Activated CD4-positive, alpha-beta T cell treated with anti-CD3 and anti-CD28 coated beads, Interleukin-2, amount 10 ng/mL, durations not matched to agents 24 days and 14 days (primary cell): ENCODE measurements at regions of chr5 and their contacts with region 1.

Region 1: DNA sequence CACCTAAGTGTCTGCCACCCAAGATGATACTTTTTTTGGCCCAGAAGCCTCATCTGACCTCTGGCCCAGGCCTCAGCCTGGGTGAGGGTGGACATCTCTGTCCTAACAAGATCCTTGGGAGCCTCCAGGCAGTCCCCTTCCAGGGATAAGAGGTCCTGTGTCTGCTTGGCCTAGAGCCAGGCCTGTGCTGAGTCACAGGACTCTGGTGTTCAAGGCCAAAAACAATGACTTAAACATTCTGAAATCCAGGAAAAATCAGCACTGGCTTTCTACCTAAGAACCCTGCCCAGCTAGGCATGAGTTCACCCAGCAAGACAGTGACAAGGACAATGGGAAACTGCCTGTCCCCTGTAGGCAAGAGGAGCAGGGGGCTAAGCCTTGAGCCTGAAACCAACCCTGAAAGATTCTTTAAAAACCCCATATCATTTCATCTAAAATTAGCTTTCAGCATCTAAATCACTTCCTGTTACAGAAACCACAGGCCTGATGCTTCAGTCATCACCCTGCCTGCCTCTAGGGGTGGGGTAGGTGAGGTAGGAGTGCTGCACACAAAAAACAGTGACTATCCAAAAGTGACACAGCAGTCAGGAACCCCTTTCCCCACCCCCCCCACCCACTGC is 29.9 kb downstream of the CSF2 start:
- DNase-seq: peak; percentile 92
- H3K4me3 Mint-ChIP-seq: peak overlapping the region; percentile 55
- H3K27ac Mint-ChIP-seq: peak overlapping the region; percentile 98
- H3K4me1 Mint-ChIP-seq: peaks cover 72% of the 10 kb centered on the region
- H3K27me3 Mint-ChIP-seq: no peaks in the 10 kb centered on the region

Region 2: GRCh38 chr5:130501151-130501865 is 1602.1 kb before region 1 on chr5:
- intact Hi-C with region 1: no loop called
- DNase-seq: no peak
- H3K4me3 Mint-ChIP-seq: no peak overlapping the region
- H3K27ac Mint-ChIP-seq: no peak overlapping the region
- H3K4me1 Mint-ChIP-seq: no peaks in the 10 kb centered on the region
- H3K27me3 Mint-ChIP-seq: no peaks in the 10 kb centered on the region

Region 3: GRCh38 chr5:131252824-131253171 is 850.6 kb before region 1 on chr5:
- intact Hi-C with region 1: loop called (anchors 10 kb)
- DNase-seq: peak; percentile 94
- H3K4me3 Mint-ChIP-seq: peak overlapping the region; percentile 85
- H3K27ac Mint-ChIP-seq: peak overlapping the region; percentile 96
- H3K4me1 Mint-ChIP-seq: peaks cover 55% of the 10 kb centered on the region
- H3K27me3 Mint-ChIP-seq: no peaks in the 10 kb centered on the region

Region 4: DNA sequence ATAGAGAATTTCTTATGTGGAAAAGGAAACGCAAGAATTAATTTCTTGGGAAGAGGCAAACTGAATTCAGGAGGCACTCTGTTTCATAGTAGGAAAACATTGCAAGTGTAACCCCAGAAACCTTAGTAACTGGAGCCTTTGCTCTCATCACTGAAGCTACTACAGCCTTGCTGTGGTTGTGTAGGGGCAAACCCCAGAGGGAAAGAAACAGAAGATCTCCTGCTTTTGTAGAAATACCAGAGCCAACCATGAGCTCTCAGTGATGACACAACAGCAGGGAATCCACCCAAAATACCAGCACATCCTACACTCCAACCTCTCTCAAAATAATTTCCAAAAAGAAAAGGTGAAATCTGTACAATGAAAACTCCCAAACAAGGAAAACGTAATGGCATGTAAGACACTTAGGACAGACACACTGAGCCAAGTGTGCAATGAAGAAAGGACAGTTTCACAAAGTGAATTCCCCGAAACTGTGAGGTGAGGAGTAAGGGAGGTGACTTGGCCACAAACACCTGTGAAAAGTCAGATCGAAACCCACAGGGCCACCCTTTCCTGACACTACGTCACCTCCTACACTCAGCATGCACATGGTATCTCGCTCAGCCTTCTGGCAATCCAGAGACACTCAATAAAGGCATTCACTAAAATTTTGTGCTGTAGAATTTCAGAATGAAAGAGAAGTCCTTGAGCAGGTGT is 83.4 kb before region 1 on chr5:
- intact Hi-C with region 1: loop called (anchors 1 kb)
- DNase-seq: peak; percentile 95
- H3K4me3 Mint-ChIP-seq: peak overlapping the region; percentile 49
- H3K27ac Mint-ChIP-seq: peak overlapping the region; percentile 87
- H3K4me1 Mint-ChIP-seq: peaks cover 45% of the 10 kb centered on the region
- H3K27me3 Mint-ChIP-seq: peaks cover 41% of the 10 kb centered on the region

Region 5: DNA sequence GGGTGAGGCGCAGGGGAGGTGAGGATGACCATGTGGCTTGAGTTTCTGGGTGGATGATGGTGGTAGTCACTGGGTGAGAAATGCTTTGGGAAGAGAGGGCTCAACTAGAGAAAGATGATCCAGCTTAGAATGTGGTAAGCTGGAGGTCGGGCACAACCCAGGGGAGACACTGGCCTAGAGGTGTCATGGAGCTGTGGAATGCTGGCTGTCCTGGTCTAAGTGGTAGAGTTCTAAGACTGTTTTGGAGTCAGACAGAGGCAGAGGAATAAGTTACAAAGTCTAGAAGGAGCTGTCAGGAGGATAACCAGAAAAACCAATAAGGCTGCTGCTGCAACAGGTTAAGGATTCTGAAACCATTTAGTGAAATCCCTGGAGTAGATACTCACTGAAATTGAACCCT is 72.8 kb before region 1 on chr5:
- intact Hi-C with region 1: no loop called
- DNase-seq: no peak
- H3K4me3 Mint-ChIP-seq: no peak overlapping the region
- H3K27ac Mint-ChIP-seq: no peak overlapping the region
- H3K4me1 Mint-ChIP-seq: peaks cover 9% of the 10 kb centered on the region
- H3K27me3 Mint-ChIP-seq: peaks cover 43% of the 10 kb centered on the region

Region 6: GRCh38 chr5:132083071-132083678 is 20.3 kb before region 1 on chr5:
- intact Hi-C with region 1: loop called (anchors 1 kb)
- DNase-seq: peak; percentile 76
- H3K4me3 Mint-ChIP-seq: peak overlapping the region; percentile 42
- H3K27ac Mint-ChIP-seq: peak overlapping the region; percentile 81
- H3K4me1 Mint-ChIP-seq: peaks cover 72% of the 10 kb centered on the region
- H3K27me3 Mint-ChIP-seq: no peaks in the 10 kb centered on the region

Region 7: DNA sequence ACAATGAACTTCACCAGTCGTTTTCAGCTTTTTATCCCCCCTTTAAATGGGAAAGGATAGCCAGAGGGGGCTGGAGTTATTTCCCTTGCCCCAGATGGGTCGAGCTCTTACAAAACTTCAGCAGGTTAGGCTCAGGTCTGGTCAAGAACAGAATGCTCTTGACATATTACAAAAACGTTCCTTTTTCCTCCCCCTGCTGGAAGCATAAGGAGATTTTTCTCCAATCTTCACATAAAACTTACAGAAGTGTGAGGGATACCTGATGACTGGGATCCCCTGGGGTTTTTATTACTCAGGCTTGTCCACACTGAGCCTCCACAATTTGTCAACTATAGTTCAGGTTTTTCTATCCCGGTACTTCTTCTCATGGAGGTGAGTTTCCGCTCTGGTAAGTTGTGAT is 30.9 kb after region 1 on chr5:
- intact Hi-C with region 1: loop called (anchors 2 kb)
- DNase-seq: no peak
- H3K4me3 Mint-ChIP-seq: no peak overlapping the region
- H3K27ac Mint-ChIP-seq: no peak overlapping the region
- H3K4me1 Mint-ChIP-seq: peaks cover 27% of the 10 kb centered on the region
- H3K27me3 Mint-ChIP-seq: peaks cover 26% of the 10 kb centered on the region

Region 8: DNA sequence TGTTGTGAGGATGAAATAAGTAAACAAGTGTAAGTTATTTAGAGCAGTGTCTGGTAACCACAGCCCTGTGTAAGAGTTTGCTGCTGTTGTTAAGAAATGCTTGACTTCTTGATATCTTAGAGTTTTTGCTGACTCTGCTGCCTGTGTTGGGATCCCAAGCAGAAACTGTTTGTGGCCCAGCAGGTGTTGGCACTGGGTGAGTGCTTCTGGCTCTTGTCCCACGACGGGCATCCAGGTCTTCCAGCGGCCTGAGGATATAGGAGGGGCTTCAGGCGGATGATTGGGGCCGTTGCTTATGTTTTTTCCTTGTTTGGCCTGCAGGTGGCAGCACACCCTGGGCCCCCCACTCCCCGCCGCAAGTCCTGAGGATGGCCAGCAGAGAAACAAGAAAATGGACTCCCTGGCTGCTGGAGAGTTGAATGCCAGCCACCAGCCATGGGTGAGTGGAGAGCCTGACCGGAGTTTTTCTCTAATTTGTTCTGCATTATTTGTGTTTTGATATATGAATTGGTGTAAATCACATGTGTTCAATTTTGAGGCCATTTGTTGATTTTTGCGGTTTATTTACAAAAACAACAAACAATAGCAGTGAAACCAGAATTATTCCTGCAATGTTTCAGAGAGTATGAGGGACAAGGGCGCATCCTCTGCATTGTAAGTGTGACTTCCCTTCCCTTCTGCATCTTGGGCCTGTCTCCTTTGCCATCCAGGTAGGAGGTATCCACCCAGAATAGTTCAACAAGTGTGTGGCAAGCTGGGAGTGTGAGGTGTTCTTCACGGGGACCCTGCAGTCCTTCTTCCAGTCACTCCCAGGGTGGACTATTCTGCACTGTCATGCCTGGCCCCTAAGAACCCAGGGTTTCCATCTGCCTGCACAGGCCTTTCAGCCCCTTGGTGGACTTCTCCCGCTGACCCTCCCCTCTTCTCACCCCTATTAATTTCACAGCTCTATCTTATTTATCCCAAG is 316.3 kb after region 1 on chr5:
- intact Hi-C with region 1: loop called (anchors 10 kb)
- DNase-seq: peak; percentile 90
- H3K4me3 Mint-ChIP-seq: peak overlapping the region; percentile 72
- H3K27ac Mint-ChIP-seq: peak overlapping the region; percentile 87
- H3K4me1 Mint-ChIP-seq: peaks cover 79% of the 10 kb centered on the region
- H3K27me3 Mint-ChIP-seq: no peaks in the 10 kb centered on the region